ENCODE measurements at regions of chr1 and their contacts with region 1.

Region 1: GRCh38 chr1:1291548-1292441 is 11.6 kb downstream of the SCNN1D start:
- DNase-seq: peak; percentile 72
- H3K4me3 Mint-ChIP-seq: no peak overlapping the region
- H3K27ac Mint-ChIP-seq: no peak overlapping the region
- H3K4me1 Mint-ChIP-seq: no peaks in the 10 kb centered on the region
- H3K27me3 Mint-ChIP-seq: no peaks in the 10 kb centered on the region

Region 2: GRCh38 chr1:1098681-1099421 is 192.9 kb before region 1 on chr1:
- CTCF ChIA-PET with region 1: no interaction called
- POLR2A ChIA-PET with region 1: no interaction called
- DNase-seq: no peak
- H3K4me3 Mint-ChIP-seq: peak overlapping the region; percentile 4
- H3K27ac Mint-ChIP-seq: peak overlapping the region; percentile 85
- H3K4me1 Mint-ChIP-seq: peaks cover 36% of the 10 kb centered on the region
- H3K27me3 Mint-ChIP-seq: no peaks in the 10 kb centered on the region

Region 3: DNA sequence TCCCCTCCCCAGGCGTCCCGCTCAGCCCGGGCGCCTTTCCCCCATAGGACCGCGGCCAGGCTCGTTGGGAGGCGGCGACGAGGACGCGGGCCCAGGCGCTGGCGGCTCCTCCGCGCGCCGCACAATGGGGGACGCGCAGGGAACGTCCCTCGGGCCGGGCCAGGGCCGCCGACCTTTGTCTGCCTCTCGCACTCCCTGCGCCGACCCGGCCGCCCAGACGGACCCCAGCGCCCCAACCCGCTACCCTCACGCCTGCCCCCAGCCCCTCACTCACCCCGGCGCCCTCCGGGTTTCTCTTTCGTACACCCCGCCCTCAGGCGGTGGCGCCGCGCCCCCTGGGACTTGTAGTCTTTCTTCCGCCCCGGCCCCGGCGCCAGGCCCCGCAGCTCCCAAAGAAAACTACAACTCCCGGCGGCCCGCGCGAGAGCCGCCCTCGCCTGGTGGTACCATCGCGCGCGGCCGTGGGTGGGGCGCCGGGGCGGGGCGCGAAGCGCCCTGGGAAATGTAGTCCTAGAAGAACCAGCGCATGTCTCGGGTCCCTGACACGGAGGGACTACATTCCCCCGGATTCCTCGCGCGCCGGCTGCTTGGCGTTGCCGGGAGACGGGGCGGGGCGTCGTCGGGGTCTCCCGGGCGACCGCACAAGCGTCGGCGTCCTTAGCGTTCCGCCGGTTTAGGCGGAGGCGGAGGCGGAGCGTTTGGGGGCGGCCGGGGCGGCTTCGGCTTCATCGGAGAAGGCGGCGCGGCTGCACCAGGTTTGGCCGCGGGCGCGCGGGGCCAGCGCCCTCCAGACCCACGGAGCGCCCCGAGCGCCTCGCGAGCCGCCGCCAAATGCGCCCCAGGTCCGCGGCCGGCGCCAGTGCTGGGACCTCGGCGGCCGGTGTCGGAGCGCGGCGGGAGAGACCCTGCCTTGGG is 175.8 kb before region 1 on chr1 and contains the start of gene C1orf159:
- CTCF ChIA-PET with region 1: interaction called, 36 read pairs
- POLR2A ChIA-PET with region 1: interaction called, 11 read pairs
- DNase-seq: peak; percentile 99
- H3K4me3 Mint-ChIP-seq: peak within 1 kb of the TSS; percentile 81
- H3K27ac Mint-ChIP-seq: peak within 1 kb of the TSS; percentile 49
- H3K4me1 Mint-ChIP-seq: peaks cover 15% of the 10 kb centered on the region
- H3K27me3 Mint-ChIP-seq: peaks cover 15% of the 10 kb centered on the region
- total RNA-seq, gene C1orf159: 18.6 to 19.9 TPM

Region 4: DNA sequence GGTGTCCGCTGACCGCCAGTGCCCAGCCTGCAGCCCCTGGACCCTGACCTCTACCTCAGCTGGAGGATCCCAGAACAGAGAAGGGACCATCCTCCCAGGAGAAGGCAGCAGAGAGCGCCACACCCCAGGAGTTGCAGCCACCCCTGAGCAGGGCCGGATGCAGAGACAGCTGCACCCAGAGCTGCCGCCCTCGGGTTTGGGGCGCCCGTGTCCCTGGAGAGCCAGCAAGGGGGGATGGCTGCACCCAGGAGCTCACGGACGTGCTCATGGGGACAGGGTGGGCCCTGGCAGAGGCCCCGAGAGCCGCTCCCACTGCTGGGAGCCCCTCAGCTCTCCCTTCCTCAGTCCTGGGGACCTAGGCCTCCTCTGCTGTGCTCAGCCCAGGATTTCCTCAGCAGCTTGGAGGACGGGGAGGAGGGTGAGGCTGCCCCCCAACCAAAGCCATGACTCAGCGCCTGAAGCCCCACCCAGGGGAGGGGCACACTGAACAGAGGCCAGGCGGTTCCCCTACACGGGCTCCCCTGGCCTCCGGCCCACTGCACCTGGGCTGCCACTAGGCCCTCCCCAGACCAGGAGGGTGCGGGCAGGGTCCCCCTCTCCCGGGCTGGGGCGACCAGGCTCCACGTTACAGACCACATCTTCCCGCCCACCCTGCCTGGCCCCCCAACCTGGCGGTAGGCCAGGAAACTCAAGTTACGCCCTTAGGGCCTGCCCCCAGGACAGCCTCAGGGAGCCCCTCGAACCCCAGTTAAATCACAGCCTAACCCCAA is 13.7 kb after region 1 on chr1:
- CTCF ChIA-PET with region 1: interaction called, 10 read pairs
- POLR2A ChIA-PET with region 1: no interaction called
- DNase-seq: peak; percentile 83
- H3K4me3 Mint-ChIP-seq: peak overlapping the region; percentile 79
- H3K27ac Mint-ChIP-seq: peak overlapping the region; percentile 86
- H3K4me1 Mint-ChIP-seq: peaks cover 30% of the 10 kb centered on the region
- H3K27me3 Mint-ChIP-seq: no peaks in the 10 kb centered on the region

Region 5: DNA sequence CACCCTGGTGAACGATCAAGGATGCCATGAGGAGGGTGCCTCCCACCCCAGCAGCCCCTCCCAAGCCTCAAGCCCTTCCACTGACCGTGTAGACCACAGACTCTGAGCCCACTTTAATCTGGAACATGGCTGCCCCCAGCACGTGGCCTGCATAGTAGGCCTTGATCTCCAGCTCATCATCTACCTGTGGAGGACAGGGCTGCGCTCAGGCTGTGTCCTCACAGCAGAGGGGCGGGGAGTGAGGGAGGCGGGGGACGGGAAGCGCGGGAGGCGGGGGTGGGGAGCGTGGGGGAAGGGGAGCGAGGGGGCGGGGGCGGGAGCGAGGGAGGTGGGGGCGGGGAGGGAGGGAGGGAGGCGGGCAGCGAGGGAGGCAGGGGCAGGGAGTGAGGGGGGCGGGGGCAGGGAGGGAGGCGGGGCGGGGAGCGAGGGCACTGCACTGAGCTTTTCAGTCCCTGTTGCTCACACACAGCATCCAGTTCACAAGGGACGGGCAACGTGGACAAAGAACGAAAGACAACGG is 23.7 kb after region 1 on chr1:
- CTCF ChIA-PET with region 1: no interaction called
- POLR2A ChIA-PET with region 1: no interaction called
- DNase-seq: no peak
- H3K4me3 Mint-ChIP-seq: no peak overlapping the region
- H3K27ac Mint-ChIP-seq: no peak overlapping the region
- H3K4me1 Mint-ChIP-seq: peaks cover 9% of the 10 kb centered on the region
- H3K27me3 Mint-ChIP-seq: no peaks in the 10 kb centered on the region

Region 6: DNA sequence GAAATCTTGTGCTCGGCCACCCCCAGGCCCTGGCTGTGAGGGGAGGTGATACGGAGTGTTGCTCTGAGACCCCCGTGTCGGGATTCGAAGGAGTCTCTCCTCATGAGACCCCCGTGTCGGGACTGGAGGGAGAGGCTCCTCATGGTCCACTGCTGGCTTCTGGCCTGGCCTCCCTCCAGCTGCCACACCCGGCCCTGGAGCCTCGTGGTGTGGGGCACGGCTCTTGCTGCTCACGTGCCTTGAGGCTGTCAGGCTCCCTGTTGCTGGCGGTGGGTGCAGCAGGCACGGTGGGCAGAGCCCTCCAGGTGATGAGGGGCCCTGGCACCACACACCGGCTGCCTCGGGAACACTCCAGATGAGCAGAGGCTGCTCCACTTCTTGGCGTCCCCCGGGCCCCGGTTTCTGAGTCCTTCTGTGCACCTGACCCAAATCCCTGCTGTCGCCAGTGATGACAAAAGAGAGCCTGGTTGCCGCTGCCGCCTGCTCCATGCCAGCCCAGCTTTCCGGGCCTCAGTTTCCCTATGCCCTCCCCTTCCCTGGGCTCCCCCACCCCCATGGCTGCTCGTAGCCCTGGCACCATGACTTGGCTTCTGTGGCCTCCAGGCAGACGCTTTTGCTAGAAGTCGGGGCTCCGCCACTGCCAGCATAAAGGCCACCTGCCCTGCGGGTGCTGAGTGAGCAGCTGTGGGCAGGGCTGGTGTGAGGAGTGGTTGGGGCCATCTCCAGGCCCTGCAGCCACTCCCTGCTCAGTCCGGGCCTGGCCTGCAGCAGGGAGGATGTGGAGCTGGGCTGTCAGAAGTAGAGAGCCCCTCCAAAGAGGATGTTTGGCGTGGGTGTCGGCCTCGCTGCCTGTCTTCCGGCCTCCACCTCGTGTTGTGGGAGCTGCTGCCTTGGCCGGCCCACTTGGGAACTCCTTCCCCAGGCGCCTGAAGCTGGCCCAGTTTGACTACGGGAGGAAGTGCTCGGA is 236.8 kb after region 1 on chr1:
- CTCF ChIA-PET with region 1: no interaction called
- POLR2A ChIA-PET with region 1: no interaction called
- DNase-seq: no peak
- H3K4me3 Mint-ChIP-seq: no peak overlapping the region
- H3K27ac Mint-ChIP-seq: no peak overlapping the region
- H3K4me1 Mint-ChIP-seq: no peaks in the 10 kb centered on the region
- H3K27me3 Mint-ChIP-seq: no peaks in the 10 kb centered on the region